Endothelial cell of umbilical vein (primary cell): ENCODE measurements at regions of chr2 and their contacts with region 1.

Region 1: GRCh38 chr2:96584017-96584416 is 47.5 kb downstream of the ARID5A start:
- DNase-seq: no peak
- H3K4me3 ChIP-seq: no peak overlapping the region
- H3K27ac ChIP-seq: no peak overlapping the region
- H3K4me1 ChIP-seq: no peaks in the 10 kb centered on the region
- H3K27me3 ChIP-seq: no peaks in the 10 kb centered on the region
- CTCF ChIP-seq: no peak
- POLR2A ChIP-seq: no peak

Region 2: GRCh38 chr2:96463119-96463518 is 120.9 kb before region 1 on chr2:
- CTCF ChIA-PET with region 1: no interaction called
- POLR2A ChIA-PET with region 1: no interaction called
- dilution Hi-C with region 1: no loop called
- intact Hi-C with region 1: no loop called
- DNase-seq: no peak
- H3K4me3 ChIP-seq: no peak overlapping the region
- H3K27ac ChIP-seq: no peak overlapping the region
- H3K4me1 ChIP-seq: no peaks in the 10 kb centered on the region
- H3K27me3 ChIP-seq: no peaks in the 10 kb centered on the region
- CTCF ChIP-seq: no peak
- POLR2A ChIP-seq: no peak

Region 3: GRCh38 chr2:96536445-96537065 is 47.5 kb before region 1 on chr2 and contains the start of gene ARID5A:
- CTCF ChIA-PET with region 1: no interaction called
- POLR2A ChIA-PET with region 1: no interaction called
- dilution Hi-C with region 1: no loop called
- intact Hi-C with region 1: no loop called
- DNase-seq: peak; percentile 88
- H3K4me3 ChIP-seq: peak within 1 kb of the TSS; percentile 38 to 77 (median 56)
- H3K27ac ChIP-seq: peak within 1 kb of the TSS; percentile 67
- H3K4me1 ChIP-seq: peaks cover 30% of the 10 kb centered on the region
- H3K27me3 ChIP-seq: no peaks in the 10 kb centered on the region
- CTCF ChIP-seq: peak in 1 of 2 donors; percentile 31
- POLR2A ChIP-seq: peak; percentile 85
- total RNA-seq, gene ARID5A: 24.7 and 29.0 TPM in 2 replicates

Region 4: DNA sequence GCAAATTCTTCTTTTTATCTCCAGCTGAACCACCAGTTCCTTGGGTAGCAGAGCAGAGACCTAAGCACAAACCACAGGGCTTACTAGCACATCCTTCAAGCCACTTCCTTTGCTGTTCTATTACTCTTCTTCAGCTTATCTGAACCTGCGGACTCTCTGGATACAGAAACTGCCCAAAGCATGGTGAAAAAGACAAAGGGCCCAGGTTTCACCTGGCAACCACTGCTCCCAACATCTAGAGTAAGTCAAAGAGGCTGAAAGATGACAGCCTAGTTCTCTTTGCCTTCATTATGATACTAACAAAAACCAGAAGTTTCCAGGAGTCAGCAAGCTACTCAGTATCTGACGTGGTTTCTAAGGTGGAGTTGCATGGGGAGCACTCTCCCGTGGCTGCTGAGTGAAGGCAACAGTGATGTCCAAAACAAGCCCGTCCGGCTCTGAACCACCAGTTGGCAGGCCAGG is 10.7 kb after region 1 on chr2:
- CTCF ChIA-PET with region 1: no interaction called
- POLR2A ChIA-PET with region 1: no interaction called
- dilution Hi-C with region 1: no loop called
- intact Hi-C with region 1: loop called (anchors 2 kb)
- DNase-seq: no peak
- H3K4me3 ChIP-seq: no peak overlapping the region
- H3K27ac ChIP-seq: no peak overlapping the region
- H3K4me1 ChIP-seq: no peaks in the 10 kb centered on the region
- H3K27me3 ChIP-seq: no peaks in the 10 kb centered on the region
- CTCF ChIP-seq: no peak
- POLR2A ChIP-seq: no peak

Region 5: DNA sequence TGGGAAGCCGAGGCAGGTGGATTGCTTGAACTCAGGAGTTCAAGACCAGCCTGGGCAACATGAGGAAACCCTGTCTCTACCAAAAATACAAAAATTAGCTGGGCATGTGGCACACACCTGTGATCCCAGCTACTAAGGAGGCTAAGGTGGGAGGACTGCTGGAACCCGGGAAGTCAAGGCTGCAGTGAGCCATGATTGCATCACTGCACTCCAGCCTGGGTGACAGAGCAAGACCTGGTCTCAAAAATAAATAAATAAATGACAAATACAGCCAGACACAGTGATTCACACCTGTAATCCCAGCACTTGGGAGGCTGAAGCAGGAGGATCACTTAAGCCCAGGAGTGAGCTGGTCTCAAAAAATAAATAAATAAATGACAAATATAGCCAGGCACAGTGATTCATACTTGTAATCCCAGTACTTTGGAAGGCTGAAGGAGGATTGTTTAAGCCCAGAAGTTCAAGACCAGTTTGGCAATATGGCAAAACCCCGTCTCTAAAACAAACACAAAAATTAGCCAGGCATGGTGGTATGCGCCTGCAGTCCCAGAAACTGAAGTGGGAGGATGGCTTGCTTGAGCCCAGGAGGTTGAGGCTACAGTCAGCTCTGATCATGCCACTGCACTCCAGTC is 47.9 kb after region 1 on chr2:
- CTCF ChIA-PET with region 1: no interaction called
- POLR2A ChIA-PET with region 1: no interaction called
- dilution Hi-C with region 1: no loop called
- intact Hi-C with region 1: no loop called
- DNase-seq: no peak
- H3K4me3 ChIP-seq: no peak overlapping the region
- H3K27ac ChIP-seq: no peak overlapping the region
- H3K4me1 ChIP-seq: peaks cover 12% of the 10 kb centered on the region
- H3K27me3 ChIP-seq: no peaks in the 10 kb centered on the region
- CTCF ChIP-seq: no peak
- POLR2A ChIP-seq: no peak